ENCODE measurements at regions of chr1 and their contacts with region 1.

Region 1: DNA sequence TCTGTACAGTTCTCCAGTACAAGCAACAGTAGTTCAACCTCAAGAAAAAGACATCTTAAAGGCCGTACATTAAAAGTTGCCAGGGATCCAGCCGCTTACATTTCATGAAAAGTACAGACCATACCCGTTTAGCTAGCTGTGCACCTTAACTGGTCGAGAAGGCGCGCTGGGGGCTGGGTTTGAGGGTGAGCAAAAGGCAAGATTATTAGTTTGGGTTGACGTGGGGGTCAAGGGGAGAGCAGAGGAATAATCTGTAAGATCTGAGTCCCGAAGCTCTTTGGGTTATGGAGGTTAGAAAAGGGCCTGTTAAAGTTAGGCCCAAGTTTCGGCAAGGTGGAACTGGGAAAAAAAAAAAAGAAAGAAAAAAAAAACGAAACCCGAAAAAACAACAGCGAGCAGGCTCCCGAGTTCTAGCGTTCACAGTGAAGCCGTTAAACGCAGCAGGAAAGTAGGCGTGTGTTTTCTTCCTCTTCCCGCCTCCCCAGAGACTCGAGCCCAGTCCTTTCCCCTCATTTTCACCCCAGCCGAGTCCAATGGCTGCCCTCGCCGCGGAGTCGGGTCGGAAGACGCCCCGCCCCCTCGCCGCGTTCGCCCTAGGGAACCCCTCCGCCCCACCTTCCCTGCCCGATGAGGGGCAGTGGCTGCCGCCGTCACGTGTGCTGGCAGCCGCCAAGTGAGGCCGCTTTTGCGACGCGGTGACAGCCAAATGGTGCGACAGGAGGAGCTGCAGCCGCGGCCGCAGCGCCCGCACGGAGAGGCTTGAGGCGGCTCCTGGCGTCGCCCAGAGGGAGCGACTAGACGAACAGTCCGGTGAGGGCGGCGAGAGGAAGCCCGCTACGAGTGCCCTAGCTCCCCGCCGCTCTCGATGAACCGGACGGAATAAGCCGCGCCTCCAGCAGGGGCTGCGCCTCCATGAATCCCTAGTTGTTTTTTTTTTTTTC is at the start of gene PKN2:
- DNase-seq: peak; percentile 92
- H3K4me3 ChIP-seq: peak within 1 kb of the TSS; percentile 98
- H3K27me3 ChIP-seq: no peaks in the 10 kb centered on the region
- CTCF ChIP-seq: peak; percentile 29
- polyA plus RNA-seq, gene PKN2: 9.5 and 21.5 TPM in 2 replicates

Region 2: DNA sequence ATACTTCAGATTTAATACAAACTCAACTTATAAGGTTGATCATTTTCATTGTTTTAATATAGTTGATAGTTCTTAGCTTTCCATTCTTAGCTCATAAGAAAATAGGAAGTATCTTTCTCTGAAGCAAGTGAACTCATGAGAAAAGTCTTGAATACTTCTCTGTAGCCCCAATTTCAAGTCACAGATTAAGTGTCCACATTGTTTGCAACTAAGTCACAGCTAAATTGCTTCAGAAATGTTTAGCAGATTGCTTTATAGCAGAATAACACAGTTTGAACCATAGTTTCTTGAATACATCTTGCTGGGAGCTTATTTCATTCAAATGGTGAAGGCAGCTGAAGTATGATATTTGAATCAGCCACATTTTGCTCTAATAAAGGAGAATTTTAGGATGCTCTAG is 10.4 kb before region 1 on chr1:
- CTCF ChIA-PET with region 1: interaction called, 3 read pairs
- POLR2A ChIA-PET with region 1: interaction called, 14 read pairs
- DNase-seq: no peak
- H3K4me3 ChIP-seq: no peak overlapping the region
- H3K27me3 ChIP-seq: no peaks in the 10 kb centered on the region
- CTCF ChIP-seq: no peak

Region 3: DNA sequence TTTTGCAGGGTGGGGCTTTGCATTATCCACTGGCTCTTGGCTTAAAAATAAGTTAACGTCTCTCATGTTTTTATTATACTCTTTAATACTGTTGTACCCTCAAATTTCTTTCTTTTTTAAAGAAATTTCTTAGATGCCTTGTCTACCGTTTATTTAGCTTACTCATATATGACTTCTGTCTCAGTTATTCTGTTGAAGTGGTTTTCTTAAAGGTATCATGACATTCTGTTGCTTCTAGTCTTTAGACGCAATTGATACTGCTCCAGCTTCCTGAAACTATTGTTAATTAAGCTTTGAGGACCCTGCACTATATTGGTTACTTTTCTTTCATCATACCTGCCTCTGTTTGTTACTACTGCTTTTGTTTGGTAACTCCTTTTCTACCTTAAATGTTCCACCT is 12.0 kb after region 1 on chr1:
- CTCF ChIA-PET with region 1: interaction called, 10 read pairs
- POLR2A ChIA-PET with region 1: interaction called, 4 read pairs
- DNase-seq: no peak
- H3K4me3 ChIP-seq: no peak overlapping the region
- H3K27me3 ChIP-seq: no peaks in the 10 kb centered on the region
- CTCF ChIP-seq: no peak

Region 4: GRCh38 chr1:88741413-88741812 is 57.6 kb after region 1 on chr1:
- CTCF ChIA-PET with region 1: no interaction called
- POLR2A ChIA-PET with region 1: no interaction called
- DNase-seq: peak; percentile 19
- H3K4me3 ChIP-seq: no peak overlapping the region
- H3K27me3 ChIP-seq: no peaks in the 10 kb centered on the region
- CTCF ChIP-seq: no peak

Region 5: GRCh38 chr1:89780721-89781120 is 1096.9 kb after region 1 on chr1:
- CTCF ChIA-PET with region 1: no interaction called
- POLR2A ChIA-PET with region 1: no interaction called
- DNase-seq: peak; percentile 21
- H3K4me3 ChIP-seq: no peak overlapping the region
- H3K27me3 ChIP-seq: no peaks in the 10 kb centered on the region
- CTCF ChIP-seq: peak; percentile 50